CD8-positive, alpha-beta T cell (primary cell): ENCODE measurements at regions of chr6 and their contacts with region 1.

Region 1: GRCh38 chr6:31806465-31807272 is at the start of gene LSM2:
- DNase-seq: peak; percentile 92 to 99 (median 97)
- ATAC-seq: peak; percentile 99
- H3K4me3 ChIP-seq: peak within 1 kb of the TSS; percentile 61 to 95
- H3K4me3 Mint-ChIP-seq: peak within 1 kb of the TSS; percentile 87
- H3K27ac ChIP-seq: peak within 1 kb of the TSS; percentile 78 to 82
- H3K27ac Mint-ChIP-seq: peak within 1 kb of the TSS; percentile 94
- H3K4me1 ChIP-seq: peaks cover 8% of the 10 kb centered on the region
- H3K4me1 Mint-ChIP-seq: peaks cover 25% of the 10 kb centered on the region
- H3K27me3 ChIP-seq: no peaks in the 10 kb centered on the region
- H3K27me3 Mint-ChIP-seq: no peaks in the 10 kb centered on the region
- CTCF ChIP-seq: no peak
- total RNA-seq, gene LSM2: 19.6 to 26.4 TPM

Region 2: GRCh38 chr6:31822036-31822821 is 15.6 kb after region 1 on chr6:
- CTCF ChIA-PET with region 1: interaction called, 8 read pairs
- POLR2A ChIA-PET with region 1: interaction called, 6 read pairs
- intact Hi-C with region 1: loop called in 1 of 2 experiments (anchors 1 kb)
- DNase-seq: peak in 8 of 9 experiments; percentile 48 to 77 (median 62)
- ATAC-seq: peak; percentile 55
- H3K4me3 ChIP-seq: peak overlapping the region; percentile 86 to 89
- H3K4me3 Mint-ChIP-seq: peak overlapping the region; percentile 95
- H3K27ac ChIP-seq: peak overlapping the region; percentile 66 to 83
- H3K27ac Mint-ChIP-seq: peak overlapping the region; percentile 98
- H3K4me1 ChIP-seq: peaks cover 41% of the 10 kb centered on the region
- H3K4me1 Mint-ChIP-seq: peaks cover 53% of the 10 kb centered on the region
- H3K27me3 ChIP-seq: no peaks in the 10 kb centered on the region
- H3K27me3 Mint-ChIP-seq: no peaks in the 10 kb centered on the region
- CTCF ChIP-seq: no peak